ENCODE measurements at regions of chr22 and their contacts with region 1.

Region 1: GRCh38 chr22:45553351-45554039 is 50.8 kb downstream of the FBLN1 start:
- DNase-seq: peak; percentile 89

Region 2: DNA sequence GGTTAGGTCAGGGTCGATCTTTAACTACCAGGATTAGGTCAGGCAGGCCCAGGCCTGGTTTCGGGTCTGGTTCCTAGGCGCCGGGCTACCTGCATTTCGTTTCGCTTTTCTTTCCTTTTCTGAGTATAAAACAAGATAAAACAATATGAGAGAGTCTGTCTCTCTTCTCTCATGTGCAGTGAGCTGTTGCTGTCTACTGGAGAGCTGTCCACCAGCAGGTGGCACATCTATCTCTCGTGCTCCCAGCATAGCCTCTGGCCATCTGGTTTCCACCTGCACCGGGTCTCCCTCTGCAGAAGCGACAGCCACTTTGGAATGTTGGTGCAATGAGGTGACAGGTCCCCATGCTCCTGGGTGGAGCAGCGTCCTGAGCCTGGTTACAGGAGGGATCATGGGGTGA is 112.4 kb before region 1 on chr22:
- CTCF ChIA-PET with region 1: interaction called, 11 read pairs
- POLR2A ChIA-PET with region 1: no interaction called
- DNase-seq: peak; percentile 61

Region 3: DNA sequence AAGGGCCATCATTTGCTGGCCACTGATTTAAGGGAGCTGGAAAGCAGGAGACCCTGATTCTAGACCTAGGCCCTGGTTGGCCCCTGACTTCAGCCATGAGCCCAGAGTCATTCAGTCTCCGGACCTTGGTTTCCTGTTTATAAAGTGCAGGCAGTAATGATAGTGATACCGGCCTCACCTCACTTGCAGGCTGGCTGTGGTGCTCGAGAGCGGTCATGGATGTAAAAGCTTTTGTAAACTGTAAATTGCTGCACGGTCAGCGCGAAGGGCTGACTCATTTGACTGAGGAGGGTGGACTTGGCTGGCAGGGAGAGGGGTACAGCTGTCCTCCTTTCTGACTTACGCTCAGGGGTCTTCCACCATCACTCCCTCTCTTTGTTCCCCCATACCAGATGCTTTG is 13.4 kb before region 1 on chr22:
- CTCF ChIA-PET with region 1: no interaction called
- POLR2A ChIA-PET with region 1: no interaction called
- DNase-seq: no peak

Region 4: DNA sequence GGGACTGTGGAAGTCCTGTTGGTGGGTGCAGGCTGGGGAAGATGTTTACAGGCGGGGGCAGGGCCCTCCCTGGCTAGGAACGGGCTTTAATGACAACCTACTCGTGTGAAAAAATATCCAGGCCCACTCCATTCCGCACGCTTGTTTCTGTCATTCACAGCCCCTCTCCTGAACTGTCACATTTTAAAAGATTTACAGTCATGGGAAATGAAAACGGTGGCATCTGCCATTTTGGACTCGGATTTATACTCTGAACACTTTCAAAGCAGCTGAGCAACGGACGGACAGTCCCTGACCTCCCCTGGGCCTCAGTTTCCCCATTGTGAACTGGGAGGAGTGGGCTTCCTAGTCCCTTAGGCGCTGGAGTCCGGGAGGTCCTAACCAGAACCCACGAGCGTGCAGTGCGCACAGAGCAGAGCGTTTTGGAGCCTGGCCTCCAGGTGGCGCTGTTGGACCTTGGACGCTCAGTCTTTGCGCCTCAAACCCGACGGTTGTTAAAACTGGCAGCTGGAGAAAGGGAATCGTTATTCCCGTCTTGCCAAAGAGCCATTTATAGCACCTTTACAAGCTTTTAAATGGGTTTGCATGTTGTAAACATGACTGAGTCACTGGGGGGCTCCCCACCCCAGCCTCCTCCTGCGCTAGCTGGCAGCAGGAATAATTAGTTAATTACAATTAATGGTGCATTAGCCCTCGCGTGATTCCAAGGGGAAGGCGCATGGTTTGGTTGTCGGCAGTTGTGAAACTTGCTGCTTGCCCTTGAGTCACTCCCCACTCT is 24.4 kb after region 1 on chr22:
- CTCF ChIA-PET with region 1: no interaction called
- POLR2A ChIA-PET with region 1: no interaction called
- DNase-seq: peak; percentile 87